Psoas muscle (tissue), 8 donors: ENCODE measurements at regions of chr5 and their contacts with region 1.

Region 1: DNA sequence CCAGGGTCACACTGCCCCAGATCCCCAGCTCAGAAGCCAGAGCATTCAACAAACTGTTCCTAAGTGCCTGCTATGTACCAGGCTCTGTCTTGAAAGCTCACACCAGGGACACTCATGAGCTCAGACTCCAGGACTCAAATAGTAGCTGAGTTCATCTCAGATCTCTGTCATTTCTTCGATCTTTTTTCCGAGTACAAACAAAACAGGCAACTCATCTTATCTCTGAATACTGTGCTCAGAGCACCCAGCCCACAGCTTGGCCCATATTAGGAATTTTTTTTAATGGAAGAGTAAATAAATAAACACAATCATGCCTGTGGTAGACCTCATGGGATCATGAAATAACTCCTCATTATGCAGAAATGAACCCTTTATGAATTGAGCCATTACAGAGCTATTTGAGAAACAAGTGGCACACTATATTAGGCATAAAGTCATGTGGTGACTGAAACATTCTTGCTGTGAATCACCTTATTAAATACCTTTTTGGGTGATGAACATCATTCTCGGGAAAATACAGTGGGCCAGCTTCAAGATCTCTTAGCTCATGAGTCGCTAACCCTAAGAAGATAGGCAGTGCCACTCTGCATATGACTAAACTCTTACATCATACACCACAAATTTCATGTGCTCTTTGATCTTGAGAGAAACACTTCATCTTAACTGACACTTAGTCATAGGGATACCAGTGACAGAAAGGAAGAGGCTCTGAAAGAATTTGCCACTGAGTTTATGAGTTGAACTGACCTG is 9.9 kb downstream of the SH3RF2 start:
- DNase-seq: peak; percentile 21 to 84
- ATAC-seq: peak; percentile 87 to 94 (median 92)
- H3K4me3 ChIP-seq: peak overlapping the region; percentile 8
- H3K27ac ChIP-seq: peak overlapping the region; percentile 85
- H3K4me1 ChIP-seq: peaks cover 43% of the 10 kb centered on the region
- H3K27me3 ChIP-seq: no peaks in the 10 kb centered on the region
- CTCF ChIP-seq: no peak

Region 2: GRCh38 chr5:145931718-145932117 is 14.6 kb before region 1 on chr5:
- intact Hi-C with region 1: no loop called
- DNase-seq: no peak
- ATAC-seq: no peak
- H3K4me3 ChIP-seq: no peak overlapping the region
- H3K27ac ChIP-seq: no peak overlapping the region
- H3K4me1 ChIP-seq: peaks cover 5% of the 10 kb centered on the region
- H3K27me3 ChIP-seq: no peaks in the 10 kb centered on the region
- CTCF ChIP-seq: no peak

Region 3: DNA sequence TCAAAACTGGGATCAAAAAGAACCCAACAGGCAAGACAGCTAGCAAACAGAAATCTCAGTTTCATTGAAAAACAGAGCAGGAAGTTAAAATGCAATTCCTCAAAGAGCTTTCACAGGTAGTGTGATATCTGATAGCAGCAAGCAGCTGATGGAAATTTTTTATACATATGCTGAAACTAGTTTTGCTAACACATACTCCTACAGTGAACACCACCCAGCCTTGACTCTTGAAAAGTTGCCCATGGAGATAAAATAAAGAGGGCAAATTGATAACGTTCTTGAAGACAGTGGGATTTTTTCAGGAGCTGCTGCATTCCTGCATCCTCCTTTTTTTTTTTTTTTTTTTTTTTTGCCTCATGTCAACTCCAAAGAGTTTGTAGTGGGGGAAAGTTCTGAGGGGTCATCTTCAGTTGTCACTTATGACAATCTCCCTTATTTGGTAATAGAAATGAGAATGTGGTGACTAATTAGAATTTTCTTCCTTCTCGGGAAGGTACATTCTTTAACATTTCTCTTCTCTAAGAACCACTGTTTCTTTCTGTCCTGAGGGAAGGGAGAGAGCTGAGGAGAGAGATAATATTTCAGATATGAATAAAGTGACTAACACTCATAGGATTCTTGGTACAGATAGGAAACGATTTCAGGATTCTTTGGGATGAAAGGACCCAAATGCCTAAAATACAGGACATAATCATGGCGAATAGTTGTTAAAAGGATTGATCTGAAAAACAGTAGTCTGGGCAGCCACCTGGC is 14.7 kb after region 1 on chr5:
- intact Hi-C with region 1: no loop called
- DNase-seq: no peak
- ATAC-seq: no peak
- H3K4me3 ChIP-seq: no peak overlapping the region
- H3K27ac ChIP-seq: no peak overlapping the region
- H3K4me1 ChIP-seq: no peaks in the 10 kb centered on the region
- H3K27me3 ChIP-seq: no peaks in the 10 kb centered on the region
- CTCF ChIP-seq: no peak

Region 4: GRCh38 chr5:145975361-145976066 is 29.2 kb after region 1 on chr5:
- intact Hi-C with region 1: loop called (anchors 1 to 5 kb)
- DNase-seq: peak in 1 of 2 donors; percentile 51
- ATAC-seq: peak; percentile 83 to 93 (median 86)
- H3K4me3 ChIP-seq: no peak overlapping the region
- H3K27ac ChIP-seq: peak overlapping the region; percentile 75
- H3K4me1 ChIP-seq: peaks cover 32% of the 10 kb centered on the region
- H3K27me3 ChIP-seq: no peaks in the 10 kb centered on the region
- CTCF ChIP-seq: no peak

Region 5: GRCh38 chr5:145981589-145982491 is 35.6 kb after region 1 on chr5:
- intact Hi-C with region 1: loop called in 1 of 2 experiments (anchors 5 kb)
- DNase-seq: no peak
- ATAC-seq: no peak
- H3K4me3 ChIP-seq: no peak overlapping the region
- H3K27ac ChIP-seq: peak overlapping the region; percentile 75
- H3K4me1 ChIP-seq: peaks cover 36% of the 10 kb centered on the region
- H3K27me3 ChIP-seq: peaks cover 0 to 2% (median 0%) of the 10 kb centered on the region in 3 donors
- CTCF ChIP-seq: no peak